PC-3 (cell line): ENCODE measurements at regions of chr2 and their contacts with region 1.

Region 1: GRCh38 chr2:40957508-40957907 is 505.6 kb upstream of the SLC8A1 start:
- DNase-seq: peak; percentile 71
- ATAC-seq: peak; percentile 57
- H3K4me3 ChIP-seq: no peak overlapping the region
- H3K27ac ChIP-seq: peak overlapping the region; percentile 52
- H3K4me1 ChIP-seq: peaks cover 26% of the 10 kb centered on the region
- H3K27me3 ChIP-seq: no peaks in the 10 kb centered on the region
- CTCF ChIP-seq: no peak

Region 2: GRCh38 chr2:40797115-40797514 is 160.4 kb before region 1 on chr2:
- CTCF ChIA-PET with region 1: no interaction called
- POLR2A ChIA-PET with region 1: no interaction called
- intact Hi-C with region 1: no loop called
- DNase-seq: peak; percentile 74
- ATAC-seq: peak; percentile 81
- H3K4me3 ChIP-seq: no peak overlapping the region
- H3K27ac ChIP-seq: no peak overlapping the region
- H3K4me1 ChIP-seq: peaks cover 10% of the 10 kb centered on the region
- H3K27me3 ChIP-seq: no peaks in the 10 kb centered on the region
- CTCF ChIP-seq: no peak

Region 3: DNA sequence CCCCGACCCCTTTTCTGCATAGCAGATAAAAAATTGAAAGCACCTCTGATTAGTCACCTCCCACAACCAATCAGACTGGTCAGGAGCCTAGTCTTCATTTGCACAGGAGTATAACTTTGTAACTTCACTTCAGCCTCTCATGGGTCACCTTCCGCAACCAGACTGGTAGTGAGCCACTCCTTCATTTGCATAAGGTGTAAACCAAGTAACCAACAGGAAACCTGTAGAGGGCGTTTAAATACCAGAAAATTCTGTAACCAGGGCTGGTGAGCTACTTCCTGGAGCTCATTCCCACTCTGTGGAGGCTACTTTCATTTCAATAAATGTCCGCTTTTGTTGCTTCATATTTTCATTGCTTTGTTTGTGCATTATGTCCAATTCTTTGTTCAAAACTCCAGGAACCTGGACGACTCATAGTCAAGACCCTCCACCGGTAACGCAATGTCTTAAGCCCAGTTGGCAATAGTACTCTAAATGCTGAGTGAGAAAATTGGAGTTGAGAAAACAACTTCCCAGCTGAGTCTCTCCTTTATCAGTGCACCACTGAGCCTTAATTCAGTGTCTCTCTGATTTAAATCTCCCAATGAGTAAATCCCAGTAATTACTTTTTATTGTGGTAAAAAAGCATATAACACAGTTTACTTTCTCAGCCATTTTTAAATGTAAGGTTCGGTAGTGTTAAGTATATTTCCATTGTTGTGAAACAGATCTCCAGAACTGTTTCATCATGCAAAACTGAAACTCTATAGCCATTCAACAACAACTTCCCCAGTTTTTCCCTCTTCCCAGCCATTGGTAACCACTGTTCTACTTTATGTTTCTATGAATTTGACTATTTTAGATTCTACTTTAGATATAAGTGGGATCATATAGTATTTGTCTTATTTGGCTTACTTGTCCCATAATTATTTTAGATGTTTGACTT is 112.9 kb before region 1 on chr2:
- CTCF ChIA-PET with region 1: no interaction called
- POLR2A ChIA-PET with region 1: no interaction called
- intact Hi-C with region 1: loop called (anchors 10 kb)
- DNase-seq: peak; percentile 92
- ATAC-seq: peak; percentile 99
- H3K4me3 ChIP-seq: peak overlapping the region; percentile 68
- H3K27ac ChIP-seq: no peak overlapping the region
- H3K4me1 ChIP-seq: peaks cover 7% of the 10 kb centered on the region
- H3K27me3 ChIP-seq: no peaks in the 10 kb centered on the region
- CTCF ChIP-seq: peak; percentile 82

Region 4: GRCh38 chr2:41169744-41170143 is 212.2 kb after region 1 on chr2:
- CTCF ChIA-PET with region 1: no interaction called
- POLR2A ChIA-PET with region 1: no interaction called
- intact Hi-C with region 1: no loop called
- DNase-seq: no peak
- ATAC-seq: no peak
- H3K4me3 ChIP-seq: no peak overlapping the region
- H3K27ac ChIP-seq: no peak overlapping the region
- H3K4me1 ChIP-seq: no peaks in the 10 kb centered on the region
- H3K27me3 ChIP-seq: no peaks in the 10 kb centered on the region
- CTCF ChIP-seq: no peak

Region 5: DNA sequence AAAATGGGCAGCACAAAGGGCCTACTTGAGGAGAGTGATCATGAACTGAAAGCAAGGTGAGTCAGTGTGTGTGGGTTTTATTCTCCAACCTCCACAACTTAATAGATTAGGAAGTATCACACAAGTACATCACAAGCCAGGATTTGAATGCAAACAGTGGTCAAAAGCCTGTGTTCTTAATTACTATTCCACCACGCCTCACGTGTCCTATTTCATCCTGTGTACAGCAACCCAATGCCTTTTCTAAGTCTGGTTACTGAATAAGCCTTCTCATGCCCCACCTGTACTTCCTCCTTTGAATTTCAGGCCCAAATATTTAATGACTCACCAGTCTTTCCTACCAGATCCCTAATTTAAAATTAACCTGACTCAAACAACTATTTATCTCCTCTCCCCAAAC is 250.1 kb after region 1 on chr2:
- CTCF ChIA-PET with region 1: no interaction called
- POLR2A ChIA-PET with region 1: no interaction called
- intact Hi-C with region 1: loop called (anchors 2 kb)
- DNase-seq: peak; percentile 72
- ATAC-seq: peak; percentile 69
- H3K4me3 ChIP-seq: no peak overlapping the region
- H3K27ac ChIP-seq: peak overlapping the region; percentile 49
- H3K4me1 ChIP-seq: peaks cover 31% of the 10 kb centered on the region
- H3K27me3 ChIP-seq: no peaks in the 10 kb centered on the region
- CTCF ChIP-seq: no peak

Region 6: GRCh38 chr2:41414486-41415230 is 457.1 kb after region 1 on chr2:
- CTCF ChIA-PET with region 1: no interaction called
- POLR2A ChIA-PET with region 1: no interaction called
- intact Hi-C with region 1: loop called (anchors 2 kb)
- DNase-seq: peak; percentile 81
- ATAC-seq: peak; percentile 64
- H3K4me3 ChIP-seq: no peak overlapping the region
- H3K27ac ChIP-seq: no peak overlapping the region
- H3K4me1 ChIP-seq: no peaks in the 10 kb centered on the region
- H3K27me3 ChIP-seq: peaks cover 6% of the 10 kb centered on the region; the same call in 1 of the 2 replicates
- CTCF ChIP-seq: peak; percentile 88

Region 7: DNA sequence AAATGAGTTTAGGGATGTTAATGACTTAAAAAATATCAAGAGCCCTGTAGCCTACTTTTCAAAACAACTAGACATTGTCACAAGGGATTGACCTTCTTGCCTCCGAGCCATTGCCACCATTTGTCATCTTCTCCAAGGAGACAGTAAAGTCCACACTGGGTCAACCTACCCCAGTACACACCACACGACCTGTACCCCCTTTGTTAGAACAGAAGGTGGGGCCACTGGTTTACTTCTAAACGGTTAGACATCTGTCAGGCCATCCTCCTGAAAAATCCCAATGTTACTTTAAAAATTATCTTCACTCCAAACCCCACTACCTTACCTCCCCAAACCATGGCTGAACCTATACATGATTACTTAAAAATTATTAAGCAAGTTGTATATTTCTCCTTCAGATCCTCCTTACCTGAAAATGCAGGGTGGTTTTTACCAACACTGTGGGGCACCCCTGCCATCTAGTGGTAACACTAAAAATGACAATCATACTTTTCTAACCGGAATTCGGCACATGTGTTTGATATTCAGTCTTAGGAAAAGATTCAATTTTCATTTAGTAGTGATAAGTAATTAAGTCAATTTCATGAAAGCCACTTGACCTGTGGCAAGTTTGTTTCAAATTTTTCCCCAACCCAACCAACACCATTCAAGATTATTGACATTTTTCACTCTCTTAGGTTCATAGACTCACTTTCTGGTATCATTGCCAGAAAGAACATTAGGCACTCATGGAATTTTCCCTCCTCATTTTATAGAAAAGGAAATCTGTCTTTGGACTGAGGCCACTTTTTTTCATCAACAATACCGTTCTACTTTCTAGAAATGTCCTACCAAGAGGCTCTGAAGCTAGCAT is 825.0 kb after region 1 on chr2:
- CTCF ChIA-PET with region 1: no interaction called
- POLR2A ChIA-PET with region 1: no interaction called
- intact Hi-C with region 1: loop called (anchors 10 kb)
- DNase-seq: peak; percentile 69
- ATAC-seq: peak; percentile 33; the same call in 1 of the 2 replicates
- H3K4me3 ChIP-seq: no peak overlapping the region
- H3K27ac ChIP-seq: no peak overlapping the region
- H3K4me1 ChIP-seq: no peaks in the 10 kb centered on the region
- H3K27me3 ChIP-seq: peaks cover 30% of the 10 kb centered on the region; the same call in 1 of the 2 replicates
- CTCF ChIP-seq: peak; percentile 92